ENCODE measurements at regions of chr1 and their contacts with region 1.

Region 1: GRCh38 chr1:48202030-48202752 is 20.3 kb upstream of the SLC5A9 start:
- DNase-seq: peak; percentile 68

Region 2: GRCh38 chr1:48109390-48110013 is 92.7 kb before region 1 on chr1:
- CTCF ChIA-PET with region 1: interaction called, 25 read pairs
- POLR2A ChIA-PET with region 1: interaction called, 3 read pairs
- DNase-seq: peak; percentile 48